Psoas muscle (tissue), 8 donors: ENCODE measurements at regions of chr18 and their contacts with region 1.

Region 1: DNA sequence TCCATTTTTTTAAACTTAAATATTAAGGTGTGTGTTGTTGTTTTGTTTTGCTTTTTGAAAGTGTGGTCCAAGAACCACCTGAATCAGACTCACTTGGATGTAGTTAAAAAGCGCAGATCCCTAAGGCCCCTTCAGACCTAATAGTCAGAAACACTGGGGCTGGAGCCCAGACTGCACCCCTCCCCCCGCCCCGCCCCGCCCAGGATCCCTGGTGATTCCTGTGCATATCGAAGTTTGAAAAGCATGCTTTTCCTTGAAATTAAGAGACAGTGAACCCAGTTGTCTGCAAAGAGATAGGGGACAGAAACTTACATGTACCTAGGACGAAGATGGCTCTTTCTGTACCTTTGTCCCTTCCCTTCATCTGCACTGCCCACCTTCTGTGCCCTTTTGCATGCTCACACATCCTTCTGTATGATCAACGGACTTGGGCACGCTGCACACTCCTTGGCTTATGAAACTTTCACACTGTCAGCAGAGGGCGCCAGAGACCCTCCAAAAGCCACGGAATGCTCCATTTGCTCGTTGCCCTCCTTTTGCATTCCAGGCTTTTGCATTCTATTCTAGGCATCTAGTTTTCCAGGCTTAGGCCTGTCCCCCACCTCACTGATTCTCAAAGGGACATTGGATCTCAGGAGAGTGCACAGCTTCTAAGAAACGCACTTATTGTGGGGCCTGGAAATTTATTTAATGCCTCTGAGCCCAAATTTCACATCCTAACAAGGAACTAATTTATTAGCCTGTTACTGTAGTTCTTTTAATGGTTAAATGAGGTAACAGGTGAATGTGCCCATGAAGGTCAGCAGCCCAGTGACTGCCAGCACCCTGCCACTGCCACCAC is 32.8 kb upstream of the SLC14A1 start:
- DNase-seq: peak; percentile 71 to 78
- ATAC-seq: peak; percentile 75 to 86 (median 76)
- H3K4me3 ChIP-seq: no peak overlapping the region
- H3K27ac ChIP-seq: no peak overlapping the region
- H3K4me1 ChIP-seq: no peaks in the 10 kb centered on the region
- H3K27me3 ChIP-seq: no peaks in the 10 kb centered on the region
- CTCF ChIP-seq: peak; percentile 83

Region 2: DNA sequence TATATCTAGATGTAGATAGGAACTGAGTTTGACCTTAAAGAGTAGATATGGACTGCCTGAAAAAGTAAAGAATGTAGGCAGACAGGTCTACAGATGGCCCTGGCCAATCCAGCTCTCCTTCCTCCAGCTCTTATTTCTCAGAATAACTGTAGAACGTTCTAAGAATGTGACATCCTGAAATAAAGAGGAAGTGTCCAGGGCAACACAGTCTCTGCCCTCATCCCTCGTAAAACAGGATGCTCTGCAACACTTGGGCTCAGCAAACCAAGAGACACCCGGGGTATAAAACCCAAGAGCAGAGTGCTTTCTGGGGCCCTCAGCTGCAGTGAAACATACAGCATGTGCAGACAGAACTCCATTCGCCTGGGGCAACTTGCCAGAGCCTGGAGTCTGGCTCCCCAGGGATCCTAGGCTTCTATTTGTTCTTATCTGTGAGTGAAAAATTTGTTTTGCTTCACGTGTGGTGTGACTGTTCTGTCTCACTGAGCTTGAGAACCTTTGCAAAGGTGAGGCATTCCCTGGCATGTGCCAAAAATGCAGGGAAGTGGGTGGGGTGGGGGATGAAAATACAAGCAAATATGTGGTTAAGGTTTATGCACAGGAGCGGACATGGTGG is 609.5 kb before region 1 on chr18:
- intact Hi-C with region 1: no loop called
- DNase-seq: no peak
- ATAC-seq: no peak
- H3K4me3 ChIP-seq: no peak overlapping the region
- H3K27ac ChIP-seq: no peak overlapping the region
- H3K4me1 ChIP-seq: no peaks in the 10 kb centered on the region
- H3K27me3 ChIP-seq: no peaks in the 10 kb centered on the region
- CTCF ChIP-seq: no peak

Region 3: DNA sequence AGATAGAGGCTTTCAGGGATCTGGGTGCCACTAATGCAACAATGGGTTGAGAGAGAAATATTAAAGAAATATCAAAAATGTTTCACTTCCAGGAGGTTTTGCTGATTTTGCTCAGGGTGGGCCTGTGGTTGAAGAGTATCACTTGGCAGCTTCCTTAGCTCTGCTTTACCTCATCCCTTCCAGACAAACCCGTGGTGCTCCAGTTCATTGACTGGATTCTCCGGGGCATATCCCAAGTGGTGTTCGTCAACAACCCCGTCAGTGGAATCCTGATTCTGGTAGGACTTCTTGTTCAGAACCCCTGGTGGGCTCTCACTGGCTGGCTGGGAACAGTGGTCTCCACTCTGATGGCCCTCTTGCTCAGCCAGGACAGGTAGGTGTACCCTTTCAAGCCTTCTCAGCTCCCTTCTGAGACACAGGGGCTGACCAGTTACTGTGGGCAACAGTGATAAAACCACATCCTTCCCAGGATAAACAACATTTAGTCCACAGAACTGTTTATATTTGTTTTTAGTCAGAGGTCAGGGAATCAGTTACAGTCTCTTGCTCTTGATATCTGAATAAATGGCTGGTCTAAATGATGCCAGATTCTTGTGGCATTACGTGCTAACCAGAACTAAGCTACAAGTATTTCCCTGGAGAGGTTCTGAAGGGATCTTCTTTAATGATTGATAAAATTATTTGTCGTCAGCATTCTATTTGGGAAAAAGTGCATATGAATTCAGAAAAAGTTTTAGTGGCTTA is 39.8 kb after region 1 on chr18:
- intact Hi-C with region 1: no loop called
- DNase-seq: no peak
- ATAC-seq: no peak
- H3K4me3 ChIP-seq: no peak overlapping the region
- H3K27ac ChIP-seq: no peak overlapping the region
- H3K4me1 ChIP-seq: no peaks in the 10 kb centered on the region
- H3K27me3 ChIP-seq: peaks cover 0 to 4% (median 0%) of the 10 kb centered on the region in 3 donors
- CTCF ChIP-seq: no peak

Region 4: GRCh38 chr18:45839414-45840395 is 148.5 kb after region 1 on chr18:
- intact Hi-C with region 1: loop called in 1 of 2 experiments (anchors 5 kb)
- DNase-seq: no peak
- ATAC-seq: peak; percentile 32 to 62 (median 48)
- H3K4me3 ChIP-seq: no peak overlapping the region
- H3K27ac ChIP-seq: no peak overlapping the region
- H3K4me1 ChIP-seq: peaks cover 13% of the 10 kb centered on the region
- H3K27me3 ChIP-seq: peaks cover 0 to 41% (median 20%) of the 10 kb centered on the region in 3 donors
- CTCF ChIP-seq: peak; percentile 40

Region 5: GRCh38 chr18:45879681-45880655 is 188.8 kb after region 1 on chr18:
- intact Hi-C with region 1: loop called in 1 of 2 experiments (anchors 1 kb)
- DNase-seq: peak; percentile 65 to 79
- ATAC-seq: peak; percentile 76 to 96 (median 86)
- H3K4me3 ChIP-seq: no peak overlapping the region
- H3K27ac ChIP-seq: no peak overlapping the region
- H3K4me1 ChIP-seq: no peaks in the 10 kb centered on the region
- H3K27me3 ChIP-seq: no peaks in the 10 kb centered on the region
- CTCF ChIP-seq: peak; percentile 99

Region 6: DNA sequence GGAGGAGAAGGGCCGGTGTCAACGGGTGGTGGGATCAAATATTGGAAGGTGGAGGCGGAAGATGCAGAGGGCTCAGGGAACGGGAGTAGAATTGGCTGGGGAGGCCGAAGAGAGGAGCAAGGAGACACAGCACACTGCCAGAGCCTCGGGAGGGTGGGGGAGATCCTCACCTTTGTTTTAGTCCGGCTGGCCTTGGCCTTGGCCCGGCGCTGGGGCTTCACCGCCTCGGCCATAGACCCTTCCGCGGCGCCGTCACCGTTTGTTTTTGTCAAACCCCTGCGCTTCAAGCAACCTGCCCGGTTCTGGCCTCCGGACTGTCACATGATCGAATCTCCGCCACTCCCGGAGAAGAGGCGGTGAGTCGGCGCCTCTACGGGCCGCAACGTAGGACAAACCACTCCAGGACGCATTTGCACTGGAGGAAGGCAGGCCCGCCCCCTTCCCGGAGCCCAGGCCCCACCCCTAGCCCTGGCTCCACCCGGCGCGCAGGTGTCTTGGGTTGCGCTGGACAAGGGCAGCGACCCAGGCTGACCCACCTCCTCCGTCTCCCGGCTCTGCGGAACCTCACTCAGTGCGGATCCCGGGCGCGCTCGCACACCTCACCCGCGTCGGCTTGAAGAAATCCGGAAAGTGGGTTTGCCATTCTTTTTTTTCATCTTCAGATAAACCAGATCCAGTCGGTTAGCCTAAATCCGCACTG is 276.0 kb after region 1 on chr18 and contains the start of gene EPG5:
- intact Hi-C with region 1: loop called (anchors 2 to 5 kb)
- DNase-seq: peak; percentile 95 to 96
- ATAC-seq: peak; percentile 99 to 100 (median 99)
- H3K4me3 ChIP-seq: peak within 1 kb of the TSS; percentile 93
- H3K27ac ChIP-seq: peak within 1 kb of the TSS; percentile 88
- H3K4me1 ChIP-seq: peaks cover 24% of the 10 kb centered on the region
- H3K27me3 ChIP-seq: no peaks in the 10 kb centered on the region
- CTCF ChIP-seq: no peak
- total RNA-seq, gene EPG5: 11.9 to 19.9 (median 16.0) TPM

Region 7: GRCh38 chr18:45974088-45974536 is 282.9 kb after region 1 on chr18:
- intact Hi-C with region 1: loop called (anchors 2 to 5 kb)
- DNase-seq: no peak
- ATAC-seq: peak; percentile 75 to 95 (median 86)
- H3K4me3 ChIP-seq: peak overlapping the region; percentile 24
- H3K27ac ChIP-seq: no peak overlapping the region
- H3K4me1 ChIP-seq: no peaks in the 10 kb centered on the region
- H3K27me3 ChIP-seq: no peaks in the 10 kb centered on the region
- CTCF ChIP-seq: peak; percentile 77

Region 8: GRCh38 chr18:46073474-46074331 is 382.5 kb after region 1 on chr18:
- intact Hi-C with region 1: loop called (anchors 10 kb)
- DNase-seq: no peak
- ATAC-seq: peak; percentile 29 to 70 (median 52)
- H3K4me3 ChIP-seq: no peak overlapping the region
- H3K27ac ChIP-seq: no peak overlapping the region
- H3K4me1 ChIP-seq: peaks cover 16% of the 10 kb centered on the region
- H3K27me3 ChIP-seq: no peaks in the 10 kb centered on the region
- CTCF ChIP-seq: peak; percentile 71